ENCODE measurements at regions of chr4 and their contacts with region 1.

Region 1: DNA sequence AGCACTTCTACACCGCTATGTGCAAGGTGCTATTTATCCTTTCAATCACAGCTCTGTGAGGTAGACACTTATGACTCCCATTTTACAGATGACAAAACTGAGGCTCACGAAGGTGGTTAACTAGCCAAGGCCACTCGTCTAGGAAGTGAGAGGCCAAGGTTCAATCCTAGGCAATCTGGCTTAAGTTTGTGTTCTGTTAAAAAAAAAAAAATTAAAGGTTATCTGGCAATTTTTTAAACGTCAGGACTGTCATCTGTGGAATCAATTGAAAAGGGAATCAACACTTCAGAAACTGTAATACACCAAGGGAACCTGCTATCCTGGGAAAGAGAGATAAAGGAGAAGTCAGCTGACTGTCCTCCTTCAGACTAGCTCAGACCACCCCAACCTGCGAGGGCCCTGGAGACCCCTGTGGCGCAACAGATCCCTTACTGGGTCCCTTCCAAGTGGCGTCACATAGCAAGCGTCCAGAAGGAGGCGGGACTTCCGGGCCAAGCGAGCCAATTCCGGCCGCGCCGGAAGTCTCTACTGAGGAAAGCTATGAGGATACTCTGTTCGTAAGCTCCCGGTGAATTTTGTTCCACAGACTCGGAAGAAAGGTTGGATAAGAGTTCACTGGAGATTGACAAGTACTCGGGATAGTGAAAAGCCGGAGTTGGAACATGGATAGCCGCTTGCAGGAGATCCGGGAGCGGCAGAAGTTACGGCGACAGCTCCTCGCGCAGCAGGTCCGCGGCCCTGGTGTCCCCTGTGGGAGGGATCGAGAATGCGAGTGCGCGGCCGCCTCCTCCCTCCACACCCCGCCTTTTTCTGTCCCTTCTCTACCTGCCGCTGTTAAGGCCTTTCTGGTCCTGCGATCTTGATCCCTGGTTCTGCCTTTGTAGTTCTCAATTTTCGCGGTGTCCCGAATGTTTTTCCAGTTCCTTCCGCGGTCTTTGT is at the start of gene METTL14:
- DNase-seq: peak; percentile 82
- H3K4me3 Mint-ChIP-seq: peak within 1 kb of the TSS; percentile 100
- H3K27ac Mint-ChIP-seq: peak within 1 kb of the TSS; percentile 95
- H3K4me1 Mint-ChIP-seq: peaks cover 16% of the 10 kb centered on the region
- H3K27me3 Mint-ChIP-seq: peaks cover 3% of the 10 kb centered on the region
- total RNA-seq, gene METTL14: 43.6 and 48.0 TPM in 2 replicates

Region 2: GRCh38 chr4:118586357-118586790 is 98.8 kb before region 1 on chr4:
- intact Hi-C with region 1: loop called (anchors 1 kb)
- DNase-seq: no peak
- H3K4me3 Mint-ChIP-seq: no peak overlapping the region
- H3K27ac Mint-ChIP-seq: no peak overlapping the region
- H3K4me1 Mint-ChIP-seq: peaks cover 7% of the 10 kb centered on the region
- H3K27me3 Mint-ChIP-seq: peaks cover 10% of the 10 kb centered on the region

Measured in activated T-helper 2 cell treated with anti-CD3 and anti-CD28 coated beads, Interferon-gamma antibody, Interleukin-2, Interleukin-4, amounts not matched to agents 10 μg/mL and 5 μg/mL and 100 μg/mL, durations not matched to agents 14 hours and 24 hours and 36 hours (primary cell).